Calu3 (cell line): ENCODE measurements at regions of chr19 and their contacts with region 1.

Region 1: GRCh38 chr19:53844849-53845246 is 20.7 kb upstream of the NLRP12 start:
- DNase-seq: no peak
- H3K4me3 Mint-ChIP-seq: no peak overlapping the region
- H3K27ac Mint-ChIP-seq: no peak overlapping the region
- H3K4me1 Mint-ChIP-seq: peaks cover 15% of the 10 kb centered on the region
- H3K27me3 Mint-ChIP-seq: no peaks in the 10 kb centered on the region
- CTCF ChIP-seq: no peak

Region 2: DNA sequence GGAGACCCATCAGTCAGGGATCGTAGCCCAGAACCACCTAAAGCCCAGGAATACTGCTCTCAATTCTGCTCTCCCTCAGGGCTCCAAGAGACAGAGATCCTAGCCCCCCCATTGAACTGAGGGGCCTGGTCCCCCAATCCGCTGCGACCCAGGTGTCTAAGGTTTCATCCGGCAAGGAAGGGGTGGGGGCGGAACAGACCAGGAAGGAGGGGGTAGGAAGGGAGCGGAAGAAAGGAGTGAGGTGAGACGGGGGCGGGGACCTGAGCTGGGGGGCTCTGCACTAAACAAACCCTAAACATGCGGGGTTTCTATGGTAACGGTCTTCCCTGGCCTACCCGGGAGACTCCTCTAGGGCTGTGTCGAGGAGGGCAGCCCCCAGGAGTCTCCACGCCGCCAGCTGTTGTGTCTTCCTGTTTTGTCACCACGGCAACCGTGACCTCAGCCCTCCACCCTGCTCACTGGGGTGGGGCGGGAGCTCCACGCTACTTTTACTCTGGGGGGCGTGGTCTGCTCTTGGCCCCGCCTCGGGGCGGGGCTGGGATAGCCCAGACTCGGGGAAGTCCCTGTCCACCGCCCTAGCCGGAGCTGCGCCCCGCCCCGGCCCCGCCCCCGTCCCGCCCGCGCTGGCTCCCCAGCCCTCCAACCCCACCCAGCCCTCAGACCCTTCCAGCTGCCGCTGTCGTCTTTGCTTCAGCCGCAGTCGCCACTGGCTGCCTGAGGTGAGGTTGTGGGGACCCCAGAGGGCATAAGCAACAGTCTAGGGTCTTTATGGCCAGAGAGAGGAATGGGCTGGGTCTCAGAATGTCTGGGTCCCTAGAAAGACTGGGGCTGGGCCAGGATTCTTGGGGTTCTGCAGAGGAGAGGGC is 22.6 kb after region 1 on chr19 and contains the start of gene MYADM:
- CTCF ChIA-PET with region 1: interaction called, 7 read pairs
- intact Hi-C with region 1: loop called (anchors 1 kb)
- DNase-seq: peak; percentile 100
- H3K4me3 Mint-ChIP-seq: peak within 1 kb of the TSS; percentile 95
- H3K27ac Mint-ChIP-seq: peak within 1 kb of the TSS; percentile 99
- H3K4me1 Mint-ChIP-seq: peaks cover 56% of the 10 kb centered on the region
- H3K27me3 Mint-ChIP-seq: no peaks in the 10 kb centered on the region
- CTCF ChIP-seq: no peak
- total RNA-seq, gene MYADM: 366 and 464 TPM in 2 replicates

Region 3: GRCh38 chr19:53927739-53928138 is 82.9 kb after region 1 on chr19:
- CTCF ChIA-PET with region 1: no interaction called
- intact Hi-C with region 1: no loop called
- DNase-seq: peak; percentile 79
- H3K4me3 Mint-ChIP-seq: no peak overlapping the region
- H3K27ac Mint-ChIP-seq: no peak overlapping the region
- H3K4me1 Mint-ChIP-seq: no peaks in the 10 kb centered on the region
- H3K27me3 Mint-ChIP-seq: peaks cover 36% of the 10 kb centered on the region
- CTCF ChIP-seq: no peak

Region 4: DNA sequence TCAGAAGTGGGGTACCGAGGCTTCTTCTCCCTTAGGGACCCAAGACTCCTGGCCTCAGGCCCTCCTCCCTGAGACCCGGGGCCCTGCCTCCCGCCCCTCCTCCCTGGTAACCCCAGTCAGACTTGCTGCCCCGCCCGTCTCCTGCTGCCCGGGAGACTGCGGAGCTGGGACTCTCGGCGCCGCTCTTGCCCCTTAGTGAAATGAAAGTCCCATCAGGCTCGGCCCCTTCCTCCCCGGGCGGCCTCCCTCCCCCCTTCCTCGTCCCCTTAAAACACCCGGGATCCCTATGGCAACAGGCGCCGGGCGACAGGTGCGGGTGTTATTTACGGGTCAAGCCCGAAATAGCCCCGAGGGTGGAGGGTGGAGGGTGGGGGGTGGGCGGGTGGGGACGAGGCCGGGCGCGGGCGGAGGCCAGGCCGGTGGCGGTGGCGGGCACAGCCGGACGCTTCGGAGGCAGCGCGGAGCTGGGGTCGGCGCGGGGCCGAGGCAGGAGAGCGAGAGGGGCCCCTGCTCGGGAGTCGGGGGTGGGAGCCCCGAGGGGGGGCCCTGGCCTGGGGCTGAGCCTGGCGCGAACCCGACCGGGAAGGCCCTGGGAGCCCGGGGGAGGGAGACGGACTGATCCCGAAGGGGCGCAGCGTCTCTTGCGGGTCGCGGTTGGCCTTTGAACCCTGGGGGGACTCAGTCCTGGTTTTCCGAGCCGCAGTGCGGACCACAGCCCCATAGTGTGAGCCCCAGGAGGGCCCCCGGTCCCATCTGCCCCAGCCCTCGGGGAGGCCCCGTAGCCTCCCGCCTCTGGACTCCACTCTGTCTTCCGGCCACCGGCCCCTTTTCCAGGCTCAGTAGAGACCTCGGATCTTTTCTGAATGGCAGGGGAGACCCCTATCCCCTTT is 146.6 kb after region 1 on chr19 and contains the start of gene CACNG6:
- CTCF ChIA-PET with region 1: no interaction called
- intact Hi-C with region 1: loop called (anchors 2 kb)
- DNase-seq: peak; percentile 94
- H3K4me3 Mint-ChIP-seq: peak within 1 kb of the TSS; percentile 76
- H3K27ac Mint-ChIP-seq: peak within 1 kb of the TSS; percentile 99
- H3K4me1 Mint-ChIP-seq: peaks cover 41% of the 10 kb centered on the region
- H3K27me3 Mint-ChIP-seq: no peaks in the 10 kb centered on the region
- CTCF ChIP-seq: no peak
- total RNA-seq, gene CACNG6: 137 and 144 TPM in 2 replicates